Caco-2 (cell line): ENCODE measurements at regions of chr18 and their contacts with region 1.

Region 1: GRCh38 chr18:8696749-8697211 is 8.6 kb upstream of the MTCL1 start:
- DNase-seq: peak; percentile 59 to 89
- H3K4me3 ChIP-seq: no peak overlapping the region
- H3K4me3 Mint-ChIP-seq: no peak overlapping the region
- H3K27ac Mint-ChIP-seq: no peak overlapping the region
- H3K4me1 ChIP-seq: no peaks in the 10 kb centered on the region
- H3K4me1 Mint-ChIP-seq: no peaks in the 10 kb centered on the region
- H3K27me3 ChIP-seq: no peaks in the 10 kb centered on the region
- H3K27me3 Mint-ChIP-seq: no peaks in the 10 kb centered on the region
- CTCF ChIP-seq: peak; percentile 90 to 91

Region 2: GRCh38 chr18:7291046-7291445 is 1405.7 kb before region 1 on chr18:
- CTCF ChIA-PET with region 1: no interaction called
- POLR2A ChIA-PET with region 1: interaction called, 10 read pairs
- intact Hi-C with region 1: no loop called
- DNase-seq: no peak
- H3K4me3 ChIP-seq: no peak overlapping the region
- H3K4me3 Mint-ChIP-seq: no peak overlapping the region
- H3K27ac Mint-ChIP-seq: no peak overlapping the region
- H3K4me1 ChIP-seq: no peaks in the 10 kb centered on the region
- H3K4me1 Mint-ChIP-seq: no peaks in the 10 kb centered on the region
- H3K27me3 ChIP-seq: no peaks in the 10 kb centered on the region; the same call in 1 of the 2 replicates
- H3K27me3 Mint-ChIP-seq: peaks cover 7% of the 10 kb centered on the region
- CTCF ChIP-seq: no peak

Region 3: DNA sequence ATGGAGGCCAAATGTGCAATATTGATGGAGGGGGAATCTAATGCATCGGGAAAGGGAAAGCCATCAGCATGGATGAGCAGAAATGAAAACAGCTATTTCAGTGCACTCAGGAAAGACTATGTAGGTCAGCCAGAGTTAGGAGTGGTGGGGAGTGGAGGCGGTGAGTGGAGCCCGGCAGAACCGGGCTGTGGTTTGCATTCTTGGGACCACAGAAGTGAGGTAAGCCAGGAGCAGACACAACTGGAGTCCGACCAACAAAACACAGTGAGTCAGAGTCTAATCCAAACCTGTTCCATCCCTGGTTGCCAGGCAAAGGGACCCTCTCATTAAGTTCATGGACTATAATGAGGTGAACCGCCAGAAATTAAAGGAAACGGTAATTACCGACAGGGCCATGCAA is 148.6 kb before region 1 on chr18:
- CTCF ChIA-PET with region 1: no interaction called
- POLR2A ChIA-PET with region 1: no interaction called
- intact Hi-C with region 1: no loop called
- DNase-seq: no peak
- H3K4me3 ChIP-seq: no peak overlapping the region
- H3K4me3 Mint-ChIP-seq: no peak overlapping the region
- H3K27ac Mint-ChIP-seq: no peak overlapping the region
- H3K4me1 ChIP-seq: no peaks in the 10 kb centered on the region
- H3K4me1 Mint-ChIP-seq: no peaks in the 10 kb centered on the region
- H3K27me3 ChIP-seq: no peaks in the 10 kb centered on the region; the same call in none of the 2 replicates
- H3K27me3 Mint-ChIP-seq: peaks cover 21% of the 10 kb centered on the region
- CTCF ChIP-seq: no peak

Region 4: GRCh38 chr18:8982416-8983184 is 285.8 kb after region 1 on chr18:
- CTCF ChIA-PET with region 1: interaction called, 29 read pairs
- POLR2A ChIA-PET with region 1: no interaction called
- intact Hi-C with region 1: loop called (anchors 1 kb)
- DNase-seq: peak; percentile 61 to 67
- H3K4me3 ChIP-seq: no peak overlapping the region
- H3K4me3 Mint-ChIP-seq: no peak overlapping the region
- H3K27ac Mint-ChIP-seq: no peak overlapping the region
- H3K4me1 ChIP-seq: peaks cover 18% of the 10 kb centered on the region
- H3K4me1 Mint-ChIP-seq: peaks cover 15% of the 10 kb centered on the region
- H3K27me3 ChIP-seq: no peaks in the 10 kb centered on the region
- H3K27me3 Mint-ChIP-seq: no peaks in the 10 kb centered on the region
- CTCF ChIP-seq: peak; percentile 45 to 59

Region 5: GRCh38 chr18:8988261-8988871 is 291.6 kb after region 1 on chr18:
- CTCF ChIA-PET with region 1: interaction called, 29 read pairs
- POLR2A ChIA-PET with region 1: no interaction called
- intact Hi-C with region 1: loop called (anchors 1 kb)
- DNase-seq: peak; percentile 64 to 70
- H3K4me3 ChIP-seq: no peak overlapping the region
- H3K4me3 Mint-ChIP-seq: no peak overlapping the region
- H3K27ac Mint-ChIP-seq: no peak overlapping the region
- H3K4me1 ChIP-seq: no peaks in the 10 kb centered on the region
- H3K4me1 Mint-ChIP-seq: no peaks in the 10 kb centered on the region
- H3K27me3 ChIP-seq: no peaks in the 10 kb centered on the region
- H3K27me3 Mint-ChIP-seq: no peaks in the 10 kb centered on the region
- CTCF ChIP-seq: peak; percentile 90 to 91

Region 6: DNA sequence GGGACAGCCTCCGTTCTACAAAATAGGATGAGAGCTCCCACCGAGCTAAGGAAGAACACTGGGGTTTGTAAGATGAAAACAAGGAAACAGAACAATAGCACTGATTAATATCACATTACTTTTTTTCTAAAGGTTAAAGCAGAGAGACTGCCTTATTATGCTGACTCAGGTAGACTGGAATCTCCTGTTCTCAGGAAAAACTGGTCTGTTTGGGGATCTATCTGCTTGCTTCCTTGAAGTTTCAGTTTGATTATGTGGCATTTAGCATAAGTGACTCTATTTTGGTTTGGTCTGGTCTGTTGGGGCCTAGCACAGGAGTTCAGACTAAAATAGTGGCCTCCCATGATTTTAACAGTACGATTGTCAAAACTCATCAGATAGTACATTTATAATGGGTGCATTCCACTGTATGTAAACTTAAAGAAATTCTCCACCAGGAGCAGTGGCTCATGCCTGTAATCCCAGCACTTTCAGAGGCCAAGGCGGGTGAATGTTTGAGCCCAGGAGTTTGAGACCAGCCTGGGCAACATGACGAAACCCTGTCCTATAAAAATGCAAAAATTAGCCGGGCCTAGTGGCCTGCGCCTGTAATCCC is 341.6 kb after region 1 on chr18:
- CTCF ChIA-PET with region 1: no interaction called
- POLR2A ChIA-PET with region 1: interaction called, 10 read pairs
- intact Hi-C with region 1: no loop called
- DNase-seq: peak in 1 of 2 experiments; percentile 10
- H3K4me3 ChIP-seq: no peak overlapping the region
- H3K4me3 Mint-ChIP-seq: no peak overlapping the region
- H3K27ac Mint-ChIP-seq: peak overlapping the region; percentile 61
- H3K4me1 ChIP-seq: peaks cover 28% of the 10 kb centered on the region
- H3K4me1 Mint-ChIP-seq: peaks cover 19% of the 10 kb centered on the region
- H3K27me3 ChIP-seq: no peaks in the 10 kb centered on the region
- H3K27me3 Mint-ChIP-seq: no peaks in the 10 kb centered on the region
- CTCF ChIP-seq: no peak